ENCODE measurements at regions of chr7 and their contacts with region 1.

Region 1: DNA sequence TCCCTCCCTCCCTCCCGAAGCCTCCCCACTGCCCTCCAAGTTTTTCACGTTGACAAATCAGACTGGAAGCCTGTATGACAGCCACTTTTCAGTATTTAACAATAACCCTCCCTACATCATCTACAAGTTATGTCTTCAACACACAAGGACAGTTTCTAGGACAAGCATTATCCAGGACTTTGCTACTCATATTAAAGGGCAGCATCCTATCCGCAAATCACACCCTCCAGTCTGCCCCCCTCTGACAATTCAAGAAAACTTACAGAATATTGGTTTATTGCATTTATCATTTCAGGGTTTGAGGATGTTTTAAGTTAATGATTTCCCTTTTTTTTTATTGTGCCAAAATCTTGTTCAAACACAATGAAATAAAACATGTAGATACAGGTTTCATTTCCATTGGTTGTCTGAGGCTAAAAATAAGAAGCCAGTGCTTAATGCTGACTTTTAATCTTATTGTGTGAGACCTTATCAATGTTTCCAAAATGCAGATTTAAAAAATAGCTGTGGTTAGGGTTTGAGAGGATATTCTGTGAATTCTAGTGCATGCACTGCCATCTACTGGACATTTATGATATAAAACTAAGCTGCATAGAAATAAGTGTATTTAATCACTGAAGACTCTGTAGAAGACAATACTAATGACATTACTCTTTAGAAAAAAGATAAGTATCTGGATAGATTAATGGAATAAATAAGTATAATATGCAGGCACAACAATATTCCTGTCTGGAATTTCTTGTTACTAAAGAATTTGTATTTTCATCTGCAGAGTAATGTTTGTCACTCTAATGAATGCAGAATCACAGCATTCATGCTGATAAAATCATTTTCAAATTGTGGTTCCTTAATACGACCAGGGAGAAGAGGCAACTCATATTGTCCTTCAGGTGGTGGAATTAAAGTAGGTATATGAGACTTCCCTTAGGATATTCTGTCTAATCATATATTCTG is 64.1 kb downstream of the CAV1 start:
- DNase-seq: no peak
- ATAC-seq: peak; percentile 23

Region 2: DNA sequence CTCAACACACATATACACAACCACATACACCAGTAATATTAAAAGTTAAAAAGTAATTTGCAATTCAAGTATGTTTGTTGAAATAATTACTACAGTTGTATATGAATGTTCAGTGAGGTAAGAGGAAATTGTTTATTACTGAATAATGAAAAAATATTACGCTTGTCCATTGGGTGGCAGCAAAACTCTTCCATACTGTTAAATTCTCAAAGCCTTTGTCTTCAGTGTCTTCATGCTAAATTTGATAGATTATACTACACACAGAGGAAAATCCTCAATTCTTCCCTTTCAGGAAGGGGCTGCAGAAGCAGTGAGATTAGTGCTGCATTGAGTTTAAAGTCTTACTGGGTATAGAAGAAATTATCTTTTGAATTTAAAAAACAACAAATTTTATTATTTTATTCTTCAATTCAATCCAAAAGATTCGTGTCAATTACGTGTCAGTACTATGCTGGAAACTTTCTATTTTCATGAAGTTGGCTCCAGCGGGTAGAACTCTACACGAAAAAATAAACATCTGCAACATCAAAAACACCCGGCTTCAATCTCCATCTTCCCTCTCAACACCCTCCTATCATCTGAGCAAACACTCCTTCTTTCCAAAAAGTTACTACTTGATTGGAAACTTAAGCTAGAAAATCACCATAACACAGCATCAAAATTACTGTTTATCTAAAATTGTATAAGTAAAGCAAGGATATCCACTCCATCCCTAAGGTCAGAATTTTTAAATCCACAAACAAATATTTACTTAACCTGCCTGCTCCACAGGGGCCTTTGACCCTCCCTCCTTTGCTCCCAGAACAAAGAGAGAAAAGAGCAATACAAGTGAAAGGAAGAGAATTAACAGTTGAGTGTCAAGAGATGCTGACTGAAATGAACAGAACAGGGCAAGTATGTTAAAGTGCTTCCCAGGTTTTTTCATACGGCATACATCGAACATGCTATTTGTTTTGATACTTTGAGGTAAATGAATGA is 415.6 kb before region 1 on chr7:
- intact Hi-C with region 1: loop called (anchors 5 to 10 kb)
- DNase-seq: no peak
- ATAC-seq: peak; percentile 67

Region 3: GRCh38 chr7:116258734-116259133 is 330.2 kb before region 1 on chr7:
- intact Hi-C with region 1: loop called in 1 of 2 experiments (anchors 2 kb)
- DNase-seq: no peak
- ATAC-seq: peak; percentile 60

Region 4: GRCh38 chr7:116525913-116526861 is 62.7 kb before region 1 on chr7:
- intact Hi-C with region 1: loop called in 1 of 2 experiments (anchors 10 kb)
- DNase-seq: peak; percentile 72 to 74
- ATAC-seq: peak; percentile 94

Region 5: GRCh38 chr7:116665332-116665996 is 76.5 kb after region 1 on chr7:
- intact Hi-C with region 1: loop called in 1 of 2 experiments (anchors 5 kb)
- DNase-seq: no peak
- ATAC-seq: no peak

Region 6: DNA sequence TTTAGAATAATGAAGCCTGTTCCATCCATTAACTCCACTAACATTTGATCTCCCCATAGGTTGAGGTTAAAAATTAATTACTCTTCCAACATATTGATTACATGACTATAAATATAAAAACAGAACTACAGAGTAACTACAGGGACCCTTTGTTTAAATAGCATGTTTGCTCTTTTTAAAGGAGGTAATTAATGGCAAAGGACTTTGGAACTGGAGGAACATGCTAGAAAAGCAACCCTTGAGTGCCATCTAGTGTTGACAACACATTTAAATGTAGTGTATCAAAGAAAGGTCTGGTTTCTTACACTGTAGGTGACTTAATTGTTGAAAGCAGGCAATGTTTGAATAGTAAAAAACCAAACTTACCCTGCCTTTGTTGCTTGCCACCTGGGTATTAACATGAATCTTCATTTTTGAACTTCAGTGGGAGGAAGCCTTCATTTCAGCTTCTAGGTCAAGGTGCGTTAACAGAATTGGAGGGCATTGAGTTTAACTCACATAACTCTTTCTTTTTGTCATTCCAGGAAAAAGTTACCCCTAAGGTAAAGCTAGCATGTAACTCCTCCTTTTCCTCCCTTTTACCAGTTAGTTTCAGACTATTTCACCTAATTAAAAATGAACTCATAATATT is 220.8 kb after region 1 on chr7:
- intact Hi-C with region 1: loop called (anchors 5 to 10 kb)
- DNase-seq: no peak
- ATAC-seq: peak; percentile 67

Region 7: DNA sequence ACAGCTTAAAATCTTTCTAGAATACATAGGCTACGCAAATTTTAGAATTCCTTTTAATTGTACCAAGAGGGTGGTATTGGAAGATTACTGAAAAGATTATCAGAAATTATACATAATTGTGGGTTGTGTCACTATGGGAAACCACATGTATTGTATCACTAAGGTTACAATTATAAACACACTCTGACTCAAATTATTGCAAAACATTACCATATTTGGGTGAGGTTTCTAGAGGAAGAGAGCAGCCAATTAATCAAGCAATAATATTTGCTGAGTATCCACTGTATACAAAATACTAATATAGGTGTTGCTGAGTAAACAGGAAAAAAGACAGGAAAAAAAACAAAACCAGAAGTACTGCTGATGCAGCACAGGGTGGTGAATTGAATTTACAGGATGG is 270.4 kb after region 1 on chr7:
- intact Hi-C with region 1: no loop called
- DNase-seq: no peak
- ATAC-seq: no peak